HepG2 (cell line): ENCODE measurements at regions of chr9 and their contacts with region 1.

Region 1: GRCh38 chr9:123102375-123103110 is 69.1 kb downstream of the GPR21 start:
- DNase-seq: no peak
- ATAC-seq: peak; percentile 30; the same call in 1 of the 3 replicates
- H3K4me3 ChIP-seq: no peak overlapping the region
- H3K27ac ChIP-seq: no peak overlapping the region
- H3K4me1 ChIP-seq: peaks cover 24% of the 10 kb centered on the region
- H3K27me3 ChIP-seq: no peaks in the 10 kb centered on the region
- CTCF ChIP-seq: peak; percentile 37
- EP300 ChIP-seq: no peak
- POLR2A ChIP-seq: no peak
- RAD21 ChIP-seq: no peak

Region 2: GRCh38 chr9:122695696-122696095 is 406.8 kb before region 1 on chr9:
- CTCF ChIA-PET with region 1: no interaction called
- POLR2A ChIA-PET with region 1: no interaction called
- in situ Hi-C with region 1: no loop called
- intact Hi-C with region 1: no loop called
- DNase-seq: no peak
- ATAC-seq: no peak
- H3K4me3 ChIP-seq: no peak overlapping the region
- H3K27ac ChIP-seq: no peak overlapping the region
- H3K4me1 ChIP-seq: no peaks in the 10 kb centered on the region
- H3K27me3 ChIP-seq: no peaks in the 10 kb centered on the region
- CTCF ChIP-seq: no peak
- EP300 ChIP-seq: no peak
- POLR2A ChIP-seq: no peak
- RAD21 ChIP-seq: no peak

Region 3: GRCh38 chr9:123087359-123087888 is 15.1 kb before region 1 on chr9:
- CTCF ChIA-PET with region 1: no interaction called
- POLR2A ChIA-PET with region 1: interaction called, 10 read pairs
- in situ Hi-C with region 1: no loop called
- intact Hi-C with region 1: no loop called
- DNase-seq: peak; percentile 79
- ATAC-seq: peak; percentile 95
- H3K4me3 ChIP-seq: no peak overlapping the region
- H3K27ac ChIP-seq: peak overlapping the region; percentile 47
- H3K4me1 ChIP-seq: peaks cover 43% of the 10 kb centered on the region
- H3K27me3 ChIP-seq: no peaks in the 10 kb centered on the region
- CTCF ChIP-seq: no peak
- EP300 ChIP-seq: peak in 1 of 2 experiments; percentile 86; a peak in 2 of 4 replicates
- POLR2A ChIP-seq: no peak
- RAD21 ChIP-seq: no peak

Region 4: DNA sequence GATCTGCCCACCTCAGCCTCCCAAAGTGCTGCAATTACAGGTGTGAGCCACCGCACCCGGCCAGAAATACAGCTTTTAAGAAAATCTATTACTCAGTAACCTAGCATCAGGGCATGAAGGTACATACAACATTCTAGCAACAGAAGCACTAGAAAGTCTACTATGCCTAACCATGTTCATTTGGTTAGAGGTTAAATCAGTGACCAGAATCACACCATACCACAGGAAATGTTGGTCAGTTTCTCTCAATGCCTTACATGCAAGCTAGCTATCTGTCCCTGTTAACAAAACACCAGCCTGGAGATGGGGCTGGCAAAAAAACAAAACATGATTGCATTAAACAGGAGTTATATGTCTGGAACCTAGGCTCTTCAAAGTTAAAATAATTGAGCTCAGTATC is 61.7 kb after region 1 on chr9:
- CTCF ChIA-PET with region 1: no interaction called
- POLR2A ChIA-PET with region 1: interaction called, 5 read pairs
- in situ Hi-C with region 1: no loop called
- intact Hi-C with region 1: loop called (anchors 10 kb)
- DNase-seq: no peak
- ATAC-seq: no peak
- H3K4me3 ChIP-seq: no peak overlapping the region
- H3K27ac ChIP-seq: no peak overlapping the region
- H3K4me1 ChIP-seq: no peaks in the 10 kb centered on the region
- H3K27me3 ChIP-seq: no peaks in the 10 kb centered on the region
- CTCF ChIP-seq: no peak
- EP300 ChIP-seq: no peak
- POLR2A ChIP-seq: no peak
- RAD21 ChIP-seq: no peak